Activated CD4-positive, alpha-beta T cell treated with anti-CD3 and anti-CD28 coated beads, Interleukin-2, amount 10 ng/mL, durations not matched to agents 24 days and 14 days (primary cell): ENCODE measurements at regions of chr16 and their contacts with region 1.

Region 1: DNA sequence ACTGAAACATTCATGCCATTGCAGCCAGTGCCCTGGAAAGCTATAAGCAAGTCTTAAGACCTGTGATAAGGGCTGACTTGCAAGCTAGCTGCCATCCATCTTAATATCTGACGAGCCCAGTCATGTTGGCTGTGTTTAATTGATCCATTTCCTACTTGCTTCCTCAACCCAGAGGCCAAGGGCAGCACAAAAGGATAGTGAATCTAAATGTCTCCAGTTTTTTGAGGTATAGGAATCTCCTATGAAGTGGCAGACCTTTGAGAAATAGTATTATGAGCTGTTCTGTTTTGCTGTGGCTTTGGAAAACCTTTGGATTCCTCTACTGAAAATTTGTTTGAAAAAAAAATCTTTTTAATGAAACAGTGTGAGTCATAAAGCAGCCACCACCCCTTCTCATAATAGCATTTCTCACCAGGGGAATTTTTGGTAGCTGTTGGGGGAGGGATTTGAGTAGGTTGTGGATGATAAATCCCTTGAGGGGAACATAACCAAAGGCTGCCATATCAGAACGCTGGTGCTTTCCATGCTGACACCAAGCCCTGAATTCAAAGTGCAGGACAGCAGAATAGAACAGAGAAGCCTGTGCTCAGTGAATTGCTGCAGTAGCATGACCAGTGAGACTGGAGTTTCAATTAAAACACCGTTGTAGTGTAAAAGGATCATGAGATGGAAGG is 12.9 kb downstream of the ZNRF1 start:
- DNase-seq: peak; percentile 80
- H3K4me3 Mint-ChIP-seq: peak overlapping the region; percentile 67
- H3K27ac Mint-ChIP-seq: peak overlapping the region; percentile 93
- H3K4me1 Mint-ChIP-seq: peaks cover 37% of the 10 kb centered on the region
- H3K27me3 Mint-ChIP-seq: no peaks in the 10 kb centered on the region

Region 2: DNA sequence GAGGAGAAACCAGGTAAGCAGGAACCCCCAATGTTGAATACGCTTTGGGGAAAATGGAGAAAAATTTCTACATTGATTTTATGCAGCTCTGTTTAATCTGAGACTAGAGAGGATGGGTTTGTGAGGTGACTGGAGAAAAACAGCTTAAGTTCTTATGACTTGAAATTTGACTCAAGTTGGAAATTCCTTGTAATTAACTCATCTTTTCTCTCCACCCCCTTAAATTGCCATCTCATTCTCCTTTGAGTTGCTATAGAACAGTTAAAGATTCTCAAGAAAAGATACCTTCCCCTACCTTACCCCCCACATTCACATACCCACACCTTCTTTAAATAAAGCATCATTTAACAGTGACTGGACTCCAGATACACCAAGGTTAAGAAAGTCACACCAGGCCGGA is 11.2 kb after region 1 on chr16:
- intact Hi-C with region 1: loop called (anchors 1 kb)
- DNase-seq: no peak
- H3K4me3 Mint-ChIP-seq: peak overlapping the region; percentile 65
- H3K27ac Mint-ChIP-seq: peak overlapping the region; percentile 83
- H3K4me1 Mint-ChIP-seq: peaks cover 27% of the 10 kb centered on the region
- H3K27me3 Mint-ChIP-seq: no peaks in the 10 kb centered on the region

Region 3: GRCh38 chr16:75064403-75065148 is 52.8 kb after region 1 on chr16:
- intact Hi-C with region 1: loop called (anchors 1 kb)
- DNase-seq: peak; percentile 74
- H3K4me3 Mint-ChIP-seq: peak overlapping the region; percentile 69
- H3K27ac Mint-ChIP-seq: peak overlapping the region; percentile 85
- H3K4me1 Mint-ChIP-seq: peaks cover 50% of the 10 kb centered on the region
- H3K27me3 Mint-ChIP-seq: no peaks in the 10 kb centered on the region

Region 4: GRCh38 chr16:75074920-75075687 is 63.3 kb after region 1 on chr16:
- intact Hi-C with region 1: loop called (anchors 2 kb)
- DNase-seq: peak; percentile 95
- H3K4me3 Mint-ChIP-seq: peak overlapping the region; percentile 89
- H3K27ac Mint-ChIP-seq: peak overlapping the region; percentile 98
- H3K4me1 Mint-ChIP-seq: peaks cover 63% of the 10 kb centered on the region
- H3K27me3 Mint-ChIP-seq: no peaks in the 10 kb centered on the region

Region 5: DNA sequence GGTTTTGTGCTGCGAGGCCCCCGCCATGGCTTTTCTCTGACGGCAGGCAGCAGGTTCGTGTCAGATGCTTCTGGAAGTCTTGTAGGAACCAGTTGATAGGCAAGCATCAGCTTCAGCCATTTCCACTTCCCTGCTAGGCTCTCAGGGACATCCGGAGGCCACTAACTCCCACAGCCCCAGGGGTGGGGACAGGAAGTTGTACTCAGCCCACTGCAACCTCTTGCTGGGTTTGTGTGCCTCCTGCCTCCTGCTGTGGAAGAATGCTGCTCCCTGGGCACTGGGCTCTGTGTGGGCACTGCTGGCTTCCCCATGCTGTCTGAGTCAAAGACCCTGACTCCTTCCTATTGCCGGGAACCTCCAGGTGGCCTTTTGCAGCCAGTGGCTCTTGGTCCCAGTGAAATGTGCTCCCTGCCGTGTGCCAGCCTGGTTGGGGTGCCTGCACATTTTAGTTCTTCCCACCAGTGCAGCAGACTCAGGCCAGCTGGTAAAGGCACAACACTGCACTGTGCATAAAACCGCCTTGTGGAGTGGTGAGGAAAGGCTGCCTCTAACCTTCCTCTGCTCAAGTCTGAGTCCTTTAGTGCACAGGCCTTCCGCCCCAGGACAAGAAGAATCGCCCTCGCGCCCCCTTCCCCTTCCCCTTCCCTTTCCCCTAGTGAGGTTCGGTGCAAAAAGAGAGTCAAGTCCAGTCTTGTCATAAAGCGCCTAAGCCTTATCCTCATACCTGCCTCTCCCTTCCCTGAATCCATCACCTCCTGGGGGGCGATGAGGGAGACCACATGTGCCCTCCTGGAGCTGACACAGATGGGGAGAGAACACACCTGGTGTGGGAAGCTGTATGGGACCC is 88.2 kb after region 1 on chr16:
- intact Hi-C with region 1: loop called (anchors 1 kb)
- DNase-seq: peak; percentile 86
- H3K4me3 Mint-ChIP-seq: peak overlapping the region; percentile 74
- H3K27ac Mint-ChIP-seq: peak overlapping the region; percentile 95
- H3K4me1 Mint-ChIP-seq: peaks cover 63% of the 10 kb centered on the region
- H3K27me3 Mint-ChIP-seq: no peaks in the 10 kb centered on the region

Region 6: DNA sequence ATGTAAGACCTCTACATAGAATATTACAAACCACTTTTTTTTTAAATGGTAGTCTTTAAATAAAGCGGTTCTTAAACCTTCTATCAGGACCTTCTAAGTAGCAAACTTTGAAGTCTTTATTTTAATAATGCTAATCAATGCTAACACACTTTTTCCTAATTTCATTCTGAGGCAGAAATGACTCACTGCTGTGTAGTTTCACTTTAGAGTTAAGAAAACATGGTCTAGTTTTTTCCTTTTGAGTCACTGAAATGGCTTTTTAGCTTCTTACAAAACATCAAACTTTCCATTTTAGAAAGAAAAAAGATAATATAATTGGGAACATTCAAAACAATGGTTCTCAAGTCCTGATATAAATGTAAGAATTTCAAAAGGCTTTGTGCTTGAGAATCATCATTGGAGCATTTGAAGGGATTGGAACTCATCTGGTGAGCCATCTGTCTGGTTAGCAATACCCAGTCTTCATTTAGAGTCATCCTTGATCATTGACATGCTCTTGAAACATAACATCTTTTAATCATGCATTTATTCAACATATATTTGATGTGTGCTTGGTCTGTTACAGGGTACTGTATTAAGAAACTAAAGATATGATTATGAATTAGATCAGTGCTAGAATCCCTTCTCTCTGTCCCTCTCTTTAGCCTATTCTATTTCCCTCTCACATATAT is 1920.9 kb after region 1 on chr16:
- intact Hi-C with region 1: loop called (anchors 10 kb)
- DNase-seq: no peak
- H3K4me3 Mint-ChIP-seq: no peak overlapping the region
- H3K27ac Mint-ChIP-seq: peak overlapping the region; percentile 20
- H3K4me1 Mint-ChIP-seq: peaks cover 3% of the 10 kb centered on the region
- H3K27me3 Mint-ChIP-seq: no peaks in the 10 kb centered on the region